ENCODE measurements at regions of chr3 and their contacts with region 1.

Region 1: GRCh38 chr3:169103951-169104941 is 559.3 kb downstream of the MECOM start:
- DNase-seq: peak; percentile 67
- ATAC-seq: peak; percentile 34
- H3K4me3 ChIP-seq: no peak overlapping the region
- H3K27ac ChIP-seq: no peak overlapping the region
- H3K4me1 ChIP-seq: peaks cover 35% of the 10 kb centered on the region
- H3K27me3 ChIP-seq: no peaks in the 10 kb centered on the region
- CTCF ChIP-seq: no peak

Region 2: DNA sequence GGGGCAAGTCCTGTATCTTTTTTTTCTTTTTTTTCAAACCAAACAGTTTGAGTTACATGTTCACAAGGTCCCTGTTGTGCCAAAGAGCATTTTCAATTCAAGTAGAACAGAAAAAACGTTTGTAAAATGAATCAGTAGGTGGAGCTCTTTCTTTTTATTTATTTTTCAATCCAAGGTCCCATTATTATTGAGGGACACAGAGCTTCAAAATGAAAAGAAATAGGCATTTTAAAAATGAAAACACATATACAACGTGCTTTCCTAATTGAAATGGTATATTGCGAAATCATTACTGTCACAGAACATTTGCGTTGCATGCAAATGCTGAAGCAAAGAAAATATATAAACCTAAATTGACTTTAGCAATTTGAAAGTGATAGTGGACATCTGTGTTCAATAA is 151.7 kb before region 1 on chr3:
- CTCF ChIA-PET with region 1: interaction called, 4 read pairs
- POLR2A ChIA-PET with region 1: no interaction called
- intact Hi-C with region 1: loop called (anchors 5 kb)
- DNase-seq: peak; percentile 73
- ATAC-seq: peak; percentile 47
- H3K4me3 ChIP-seq: no peak overlapping the region
- H3K27ac ChIP-seq: peak overlapping the region; percentile 89
- H3K4me1 ChIP-seq: peaks cover 34% of the 10 kb centered on the region
- H3K27me3 ChIP-seq: no peaks in the 10 kb centered on the region
- CTCF ChIP-seq: peak; percentile 73

Region 3: GRCh38 chr3:169334991-169335390 is 230.7 kb after region 1 on chr3:
- CTCF ChIA-PET with region 1: no interaction called
- POLR2A ChIA-PET with region 1: no interaction called
- intact Hi-C with region 1: no loop called
- DNase-seq: no peak
- ATAC-seq: no peak
- H3K4me3 ChIP-seq: no peak overlapping the region
- H3K27ac ChIP-seq: no peak overlapping the region
- H3K4me1 ChIP-seq: peaks cover 37% of the 10 kb centered on the region
- H3K27me3 ChIP-seq: no peaks in the 10 kb centered on the region
- CTCF ChIP-seq: no peak